GM10248 (cell line): ENCODE measurements at regions of chr17 and their contacts with region 1.

Region 1: DNA sequence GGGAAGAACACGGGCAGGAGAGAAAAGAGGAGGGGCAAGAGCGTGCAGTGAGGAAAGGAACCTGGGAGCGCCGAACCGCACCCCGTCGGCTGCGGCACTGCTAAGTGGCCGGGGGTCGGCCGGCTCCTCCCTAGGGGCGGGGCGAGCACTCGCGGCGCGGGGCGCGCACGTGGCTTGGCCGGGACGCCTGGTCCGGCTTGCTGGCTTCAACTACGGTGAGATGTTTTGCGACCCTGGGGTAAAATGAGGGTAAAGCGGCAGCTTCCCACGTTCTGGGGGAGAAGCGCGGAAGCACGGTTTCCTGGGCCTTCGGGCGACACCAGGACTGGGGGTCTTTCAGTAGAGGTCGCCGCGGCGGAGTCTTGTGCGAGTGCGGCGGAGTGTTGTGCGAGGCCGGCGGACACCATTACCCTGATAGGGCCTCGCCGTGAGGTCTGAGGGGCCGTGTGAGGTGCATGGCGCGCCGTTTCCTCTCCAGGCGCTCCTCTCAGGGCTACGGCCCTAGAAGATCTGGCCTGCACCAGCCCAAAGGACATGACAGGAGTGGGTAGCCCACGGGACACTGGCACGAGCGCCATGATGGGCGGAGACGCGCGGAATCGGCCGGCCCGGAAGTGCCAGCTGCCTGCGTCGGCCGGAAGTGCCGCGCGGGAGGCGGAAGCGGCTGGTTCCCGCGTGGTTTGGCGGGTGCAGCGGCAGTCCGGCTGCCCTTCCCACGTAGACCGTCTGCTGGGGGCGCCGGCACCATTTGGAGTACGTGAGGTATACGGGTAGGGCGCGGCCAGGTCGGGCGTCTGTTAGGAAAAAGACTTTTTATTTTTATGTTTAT is at the starts of genes MYO19 and PIGW:
- DNase-seq: peak; percentile 92
- CTCF ChIP-seq: peak; percentile 31

Region 2: GRCh38 chr17:36524428-36524876 is 10.6 kb before region 1 on chr17:
- CTCF ChIA-PET with region 1: interaction called, 14 read pairs
- POLR2A ChIA-PET with region 1: interaction called, 3 read pairs
- DNase-seq: no peak
- CTCF ChIP-seq: no peak